ENCODE measurements at regions of chr4 and their contacts with region 1.

Region 1: DNA sequence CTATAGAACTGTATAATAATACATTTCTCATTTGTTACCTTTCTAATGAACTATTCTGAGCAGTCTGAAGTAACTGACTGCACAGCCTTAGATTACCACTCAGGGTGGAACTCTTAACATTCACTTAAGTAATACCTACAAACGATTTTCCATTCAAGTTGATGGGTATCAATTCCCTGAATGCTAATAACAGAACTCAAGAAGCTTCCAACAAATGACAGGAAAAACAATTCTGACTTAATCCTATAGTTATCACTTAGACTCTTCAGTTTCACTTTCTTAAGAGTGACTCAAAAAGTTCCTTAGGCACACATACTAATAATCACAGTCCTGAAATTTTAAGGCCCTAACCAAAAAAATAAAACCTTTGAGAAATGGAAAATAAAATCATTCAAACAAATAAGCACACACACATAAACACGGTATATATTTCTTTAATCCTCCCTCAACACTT is 20.9 kb downstream of the HNRNPD start:
- DNase-seq: no peak
- ATAC-seq: peak; percentile 74
- H3K4me3 Mint-ChIP-seq: peak overlapping the region; percentile 7
- H3K27ac Mint-ChIP-seq: peak overlapping the region; percentile 74
- H3K4me1 Mint-ChIP-seq: peaks cover 50% of the 10 kb centered on the region
- H3K27me3 Mint-ChIP-seq: no peaks in the 10 kb centered on the region

Region 2: DNA sequence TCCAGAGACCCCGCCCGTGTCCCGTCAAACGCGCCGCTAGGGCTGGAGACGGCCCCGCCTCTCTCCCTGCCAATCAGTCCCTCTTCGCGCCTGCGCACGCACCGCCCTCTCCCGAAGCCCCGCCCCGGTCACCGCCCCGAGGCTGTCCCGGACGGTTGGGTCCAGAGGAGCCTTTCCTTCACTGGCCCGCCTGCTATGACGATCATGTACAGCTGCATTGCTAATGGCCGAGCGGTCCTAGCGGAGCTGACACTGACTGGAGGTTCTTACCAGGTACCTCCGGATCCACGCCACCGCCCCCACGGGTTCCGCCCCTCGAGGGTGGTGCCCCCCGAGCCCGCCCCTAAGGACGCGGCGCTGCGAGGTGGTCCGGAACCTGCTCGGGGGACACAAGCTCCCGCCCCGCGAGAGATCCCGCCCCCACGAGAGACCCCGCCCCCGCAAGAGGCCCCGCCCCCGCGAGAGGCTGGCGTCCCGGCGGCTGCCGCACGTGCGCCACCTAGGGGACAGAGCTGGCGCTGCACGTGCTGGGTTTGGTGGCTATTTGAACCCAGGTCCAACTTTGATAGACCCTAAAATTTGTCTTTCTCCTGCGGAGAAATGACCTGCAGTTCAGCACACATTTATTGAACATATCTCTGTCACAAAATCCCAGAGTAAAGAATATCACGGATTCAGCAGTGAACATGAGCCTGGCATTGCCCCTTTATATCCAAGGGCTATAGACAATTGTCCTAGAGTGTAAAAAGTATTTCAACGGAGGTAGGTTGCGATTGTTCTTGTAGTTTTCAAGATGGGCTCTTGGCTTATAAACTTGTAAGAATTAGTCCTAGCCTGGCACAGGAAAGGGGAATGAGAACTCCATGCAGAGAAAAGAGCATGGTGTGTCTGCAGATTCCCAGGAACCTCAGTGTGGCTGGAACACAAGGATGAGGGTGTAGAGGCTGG is 67.8 kb before region 1 on chr4:
- CTCF ChIA-PET with region 1: interaction called, 5 read pairs
- POLR2A ChIA-PET with region 1: interaction called, 5 read pairs
- intact Hi-C with region 1: loop called (anchors 5 kb)
- DNase-seq: peak; percentile 100
- ATAC-seq: peak; percentile 99
- H3K4me3 Mint-ChIP-seq: peak overlapping the region; percentile 68
- H3K27ac Mint-ChIP-seq: peak overlapping the region; percentile 62
- H3K4me1 Mint-ChIP-seq: peaks cover 13% of the 10 kb centered on the region
- H3K27me3 Mint-ChIP-seq: no peaks in the 10 kb centered on the region

Region 3: GRCh38 chr4:82367438-82368097 is 14.6 kb after region 1 on chr4:
- CTCF ChIA-PET with region 1: interaction called, 7 read pairs
- POLR2A ChIA-PET with region 1: interaction called, 3 read pairs
- intact Hi-C with region 1: loop called (anchors 1 to 2 kb)
- DNase-seq: no peak
- ATAC-seq: peak; percentile 19
- H3K4me3 Mint-ChIP-seq: no peak overlapping the region
- H3K27ac Mint-ChIP-seq: peak overlapping the region; percentile 35
- H3K4me1 Mint-ChIP-seq: peaks cover 75% of the 10 kb centered on the region
- H3K27me3 Mint-ChIP-seq: no peaks in the 10 kb centered on the region

Region 4: GRCh38 chr4:82500106-82500965 is 147.4 kb after region 1 on chr4:
- CTCF ChIA-PET with region 1: no interaction called
- POLR2A ChIA-PET with region 1: no interaction called
- intact Hi-C with region 1: no loop called
- DNase-seq: no peak
- ATAC-seq: no peak
- H3K4me3 Mint-ChIP-seq: no peak overlapping the region
- H3K27ac Mint-ChIP-seq: no peak overlapping the region
- H3K4me1 Mint-ChIP-seq: no peaks in the 10 kb centered on the region
- H3K27me3 Mint-ChIP-seq: no peaks in the 10 kb centered on the region